PC-3 (cell line): ENCODE measurements at regions of chr6 and their contacts with region 1.

Region 1: GRCh38 chr6:13328076-13328874 is at the start of gene TBC1D7:
- DNase-seq: peak; percentile 89
- ATAC-seq: peak; percentile 78
- H3K4me3 ChIP-seq: peak within 1 kb of the TSS; percentile 90
- H3K27ac ChIP-seq: peak within 1 kb of the TSS; percentile 76
- H3K4me1 ChIP-seq: peaks cover 30% of the 10 kb centered on the region
- H3K27me3 ChIP-seq: no peaks in the 10 kb centered on the region
- CTCF ChIP-seq: peak; percentile 25
- total RNA-seq, gene TBC1D7: 16.9 and 18.5 TPM in 2 replicates

Region 2: DNA sequence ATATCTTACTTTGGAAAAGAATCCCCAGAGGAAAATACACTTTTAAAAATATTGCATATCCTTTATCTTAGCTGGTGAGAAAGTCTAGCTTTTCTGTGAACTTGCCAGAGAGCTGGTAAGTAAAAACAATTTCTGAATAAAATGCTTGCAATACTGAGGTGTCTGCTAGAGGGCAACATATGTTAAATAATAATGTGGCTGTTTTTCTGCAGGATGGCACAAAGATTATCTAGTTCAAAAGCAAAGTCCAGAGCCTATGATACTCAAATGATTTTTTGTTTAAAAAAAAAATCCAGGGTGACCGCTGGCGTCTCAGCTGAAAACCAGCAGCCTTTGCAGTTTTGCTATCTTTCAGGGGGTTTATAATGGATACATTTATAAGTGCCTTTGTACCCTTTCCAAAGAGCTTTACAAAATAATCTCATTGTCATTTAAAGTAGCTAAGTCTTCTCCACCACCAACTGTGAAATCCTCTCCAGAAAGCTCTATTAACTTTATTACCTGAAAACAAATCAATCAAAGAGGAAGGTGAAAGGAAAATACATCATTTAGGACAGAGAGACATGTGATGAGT is 416.8 kb before region 1 on chr6:
- CTCF ChIA-PET with region 1: no interaction called
- POLR2A ChIA-PET with region 1: no interaction called
- intact Hi-C with region 1: loop called (anchors 1 kb)
- DNase-seq: peak; percentile 51
- ATAC-seq: no peak
- H3K4me3 ChIP-seq: no peak overlapping the region
- H3K27ac ChIP-seq: no peak overlapping the region
- H3K4me1 ChIP-seq: no peaks in the 10 kb centered on the region
- H3K27me3 ChIP-seq: peaks cover 68% of the 10 kb centered on the region
- CTCF ChIP-seq: peak; percentile 70

Region 3: GRCh38 chr6:13302751-13303667 is 25.3 kb before region 1 on chr6:
- CTCF ChIA-PET with region 1: no interaction called
- POLR2A ChIA-PET with region 1: interaction called, 8 read pairs
- intact Hi-C with region 1: loop called (anchors 2 kb)
- DNase-seq: peak; percentile 95
- ATAC-seq: peak; percentile 90
- H3K4me3 ChIP-seq: no peak overlapping the region
- H3K27ac ChIP-seq: peak overlapping the region; percentile 34
- H3K4me1 ChIP-seq: peaks cover 16% of the 10 kb centered on the region
- H3K27me3 ChIP-seq: no peaks in the 10 kb centered on the region
- CTCF ChIP-seq: no peak

Region 4: DNA sequence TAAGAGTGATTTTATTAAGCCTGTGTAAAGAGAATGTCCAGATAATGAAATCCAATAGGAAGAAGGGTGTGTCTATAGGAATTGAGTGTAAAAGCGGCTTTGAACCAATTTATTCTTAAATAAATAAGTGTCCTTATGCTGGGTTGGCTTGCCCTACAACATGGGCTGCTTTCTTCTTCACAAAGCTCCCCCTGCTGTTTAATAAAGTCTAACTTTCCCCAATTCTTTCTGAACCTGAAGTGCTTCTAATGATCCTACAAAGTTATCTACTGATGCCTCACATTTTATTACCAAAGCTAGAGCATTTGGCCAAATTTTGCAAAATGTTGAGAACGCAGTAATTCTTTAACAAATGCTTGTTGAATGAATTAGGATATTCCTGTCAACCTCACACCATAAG is 209.8 kb after region 1 on chr6:
- CTCF ChIA-PET with region 1: no interaction called
- POLR2A ChIA-PET with region 1: no interaction called
- intact Hi-C with region 1: loop called (anchors 1 kb)
- DNase-seq: peak; percentile 70
- ATAC-seq: peak; percentile 66
- H3K4me3 ChIP-seq: no peak overlapping the region
- H3K27ac ChIP-seq: no peak overlapping the region
- H3K4me1 ChIP-seq: no peaks in the 10 kb centered on the region
- H3K27me3 ChIP-seq: no peaks in the 10 kb centered on the region
- CTCF ChIP-seq: peak; percentile 72